ENCODE measurements at regions of chr10 and their contacts with region 1.

Region 1: GRCh38 chr10:102713814-102714620 is at the start of gene ARL3:
- DNase-seq: peak; percentile 98
- ATAC-seq: peak; percentile 94
- H3K4me3 Mint-ChIP-seq: peak within 1 kb of the TSS; percentile 91
- H3K27ac Mint-ChIP-seq: peak within 1 kb of the TSS; percentile 92
- H3K4me1 Mint-ChIP-seq: peaks cover 55% of the 10 kb centered on the region
- H3K27me3 Mint-ChIP-seq: no peaks in the 10 kb centered on the region
- total RNA-seq, gene ARL3: 4.7 to 5.2 TPM

Region 2: GRCh38 chr10:102645741-102646609 is 68.0 kb before region 1 on chr10:
- CTCF ChIA-PET with region 1: interaction called, 48 read pairs
- POLR2A ChIA-PET with region 1: interaction called, 27 read pairs
- DNase-seq: peak; percentile 84
- ATAC-seq: peak; percentile 35
- H3K4me3 Mint-ChIP-seq: peak overlapping the region; percentile 99
- H3K27ac Mint-ChIP-seq: peak overlapping the region; percentile 94
- H3K4me1 Mint-ChIP-seq: peaks cover 55% of the 10 kb centered on the region
- H3K27me3 Mint-ChIP-seq: no peaks in the 10 kb centered on the region

Region 3: DNA sequence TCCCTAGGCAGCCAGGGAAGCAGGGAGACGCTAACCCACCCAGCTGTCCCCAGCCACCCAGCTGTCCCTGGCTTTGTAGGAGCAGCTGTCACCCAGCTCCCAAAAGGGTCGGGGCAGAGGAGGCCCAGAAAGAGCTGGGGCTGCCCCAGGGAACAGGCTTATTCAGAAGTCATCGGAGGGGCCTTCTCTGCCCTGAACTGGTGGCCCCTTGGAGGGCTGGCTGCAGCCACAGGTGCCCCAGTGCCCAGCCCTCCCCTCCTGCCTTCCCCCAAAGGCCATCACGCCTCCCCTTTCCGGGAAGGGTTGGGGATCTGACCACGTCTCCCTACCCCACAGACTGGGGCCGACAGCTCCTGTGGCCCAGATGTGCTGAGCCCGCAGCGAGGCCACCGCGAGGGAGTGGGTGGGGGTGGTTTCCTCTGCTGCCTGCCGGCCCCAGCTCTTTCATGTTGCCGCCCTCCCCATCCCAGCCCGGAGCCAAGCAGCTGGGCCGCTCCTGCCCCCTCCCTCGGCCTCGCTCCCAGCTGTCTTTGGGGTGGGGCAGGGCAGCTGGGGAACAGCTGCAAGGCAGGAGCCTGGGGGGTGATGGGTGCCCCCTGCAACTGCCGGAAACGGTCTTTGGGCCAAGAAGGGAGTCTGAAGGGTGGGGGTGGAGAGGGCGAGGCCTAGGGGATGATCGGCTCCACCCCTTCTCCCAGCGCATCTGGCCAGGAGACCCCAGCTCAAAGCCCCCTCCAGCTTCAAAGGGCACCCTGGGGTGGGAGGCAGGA is 52.9 kb before region 1 on chr10:
- CTCF ChIA-PET with region 1: interaction called, 10 read pairs
- POLR2A ChIA-PET with region 1: interaction called, 11 read pairs
- DNase-seq: peak; percentile 86
- ATAC-seq: peak; percentile 91
- H3K4me3 Mint-ChIP-seq: peak overlapping the region; percentile 54
- H3K27ac Mint-ChIP-seq: peak overlapping the region; percentile 91
- H3K4me1 Mint-ChIP-seq: peaks cover 52% of the 10 kb centered on the region
- H3K27me3 Mint-ChIP-seq: no peaks in the 10 kb centered on the region

Region 4: DNA sequence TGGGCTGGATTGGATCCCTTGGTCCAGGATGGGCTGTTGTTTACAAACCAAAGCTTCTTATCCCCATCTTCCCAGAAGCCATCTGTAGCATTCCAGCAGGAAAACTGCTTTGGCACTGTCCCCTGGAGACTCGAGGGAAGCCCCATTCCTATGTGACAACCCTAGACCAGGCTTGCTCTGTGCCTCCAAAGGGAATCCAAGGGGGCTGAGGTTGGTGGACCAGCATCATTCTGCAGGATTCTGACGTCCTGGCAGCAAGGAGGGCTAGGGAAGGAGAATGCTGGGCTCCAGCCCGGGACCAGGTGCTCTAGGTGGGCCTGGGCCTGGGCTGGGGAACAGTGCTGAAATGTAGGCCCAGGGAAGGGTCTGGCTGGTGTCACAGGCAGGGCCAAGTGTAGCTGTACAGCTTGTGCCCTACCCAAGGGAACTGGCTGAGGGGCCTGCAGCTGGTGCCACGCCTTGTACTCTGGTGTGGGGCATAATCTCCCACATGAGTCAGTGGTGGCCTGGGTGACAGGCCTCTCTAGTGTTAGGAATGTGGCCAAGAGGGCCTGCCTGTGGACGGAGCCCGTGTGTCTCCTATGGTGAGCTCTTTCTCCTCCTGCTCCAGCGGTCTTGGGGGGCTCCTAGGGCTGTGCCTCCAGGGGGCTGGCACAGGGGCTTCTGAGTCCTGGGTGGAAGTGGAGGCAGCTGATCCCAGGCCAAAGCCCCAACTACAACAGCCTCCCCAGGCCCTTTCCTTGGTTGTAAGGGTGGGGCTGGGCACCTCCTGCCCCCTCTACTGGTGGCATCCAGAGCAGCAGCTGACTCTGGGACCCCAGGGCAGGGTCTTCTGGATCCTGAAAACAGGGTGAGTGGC is 44.6 kb before region 1 on chr10:
- CTCF ChIA-PET with region 1: interaction called, 61 read pairs
- POLR2A ChIA-PET with region 1: interaction called, 8 read pairs
- DNase-seq: no peak
- ATAC-seq: no peak
- H3K4me3 Mint-ChIP-seq: no peak overlapping the region
- H3K27ac Mint-ChIP-seq: peak overlapping the region; percentile 55
- H3K4me1 Mint-ChIP-seq: peaks cover 40% of the 10 kb centered on the region
- H3K27me3 Mint-ChIP-seq: no peaks in the 10 kb centered on the region

Region 5: GRCh38 chr10:102678842-102679289 is 35.2 kb before region 1 on chr10:
- CTCF ChIA-PET with region 1: interaction called, 61 read pairs
- POLR2A ChIA-PET with region 1: interaction called, 6 read pairs
- DNase-seq: no peak
- ATAC-seq: no peak
- H3K4me3 Mint-ChIP-seq: no peak overlapping the region
- H3K27ac Mint-ChIP-seq: no peak overlapping the region
- H3K4me1 Mint-ChIP-seq: peaks cover 48% of the 10 kb centered on the region
- H3K27me3 Mint-ChIP-seq: no peaks in the 10 kb centered on the region

Region 6: DNA sequence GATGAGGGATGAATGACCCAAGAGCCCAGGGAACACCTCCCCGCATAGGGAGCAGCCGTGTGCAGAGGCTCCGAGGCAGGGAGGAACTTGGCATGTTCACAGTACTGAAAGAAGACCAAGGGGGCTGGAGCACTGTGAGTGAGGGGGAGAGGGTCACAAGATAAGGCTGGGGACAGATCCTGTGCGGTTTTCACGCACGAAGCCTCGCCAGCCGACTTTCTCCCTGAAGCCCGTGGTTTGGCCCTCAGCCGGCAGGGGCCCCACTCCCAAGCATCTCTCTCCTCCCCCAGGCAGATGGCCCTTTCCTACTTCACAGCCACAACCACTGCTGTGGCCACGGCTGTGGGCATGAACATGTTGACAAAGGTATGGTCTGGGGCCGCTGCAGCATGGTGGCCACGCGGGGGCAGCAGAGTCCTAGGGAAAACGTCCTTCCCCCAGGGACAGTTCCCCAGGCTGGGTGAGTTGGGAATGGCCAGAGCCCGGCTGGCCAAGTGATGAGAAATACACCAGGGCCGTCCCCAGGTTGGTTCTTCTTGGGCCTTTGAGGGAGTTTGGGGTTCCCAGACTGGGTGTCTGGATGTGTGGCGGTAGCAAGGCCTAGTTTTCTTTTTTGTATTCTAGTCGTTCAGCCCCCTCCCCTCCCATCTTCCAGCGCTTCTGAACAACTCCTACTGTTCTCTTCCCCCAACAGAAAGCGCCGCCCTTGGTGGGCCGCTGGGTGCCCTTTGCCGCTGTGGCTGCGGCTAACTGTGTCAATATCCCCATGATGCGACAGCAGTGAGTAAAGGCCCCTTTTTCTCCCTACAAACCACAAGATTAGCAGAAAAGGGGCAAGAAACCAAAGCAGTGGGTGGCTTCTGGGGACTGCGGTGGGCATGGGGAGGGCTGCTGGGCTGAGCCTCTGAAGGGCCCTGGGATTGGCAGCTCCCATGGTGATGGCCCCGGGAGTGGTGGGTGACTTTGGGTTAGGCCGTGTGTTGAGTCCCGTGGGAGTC is 15.3 kb after region 1 on chr10:
- CTCF ChIA-PET with region 1: interaction called, 13 read pairs
- POLR2A ChIA-PET with region 1: interaction called, 4 read pairs
- DNase-seq: peak; percentile 73
- ATAC-seq: peak; percentile 88
- H3K4me3 Mint-ChIP-seq: no peak overlapping the region
- H3K27ac Mint-ChIP-seq: peak overlapping the region; percentile 66
- H3K4me1 Mint-ChIP-seq: peaks cover 14% of the 10 kb centered on the region
- H3K27me3 Mint-ChIP-seq: no peaks in the 10 kb centered on the region

Region 7: GRCh38 chr10:102743588-102744373 is 29.8 kb after region 1 on chr10 and contains the start of gene WBP1L:
- CTCF ChIA-PET with region 1: interaction called, 15 read pairs
- POLR2A ChIA-PET with region 1: interaction called, 3 read pairs
- DNase-seq: peak; percentile 97
- ATAC-seq: peak; percentile 99
- H3K4me3 Mint-ChIP-seq: peak within 1 kb of the TSS; percentile 100
- H3K27ac Mint-ChIP-seq: peak within 1 kb of the TSS; percentile 97
- H3K4me1 Mint-ChIP-seq: peaks cover 46% of the 10 kb centered on the region
- H3K27me3 Mint-ChIP-seq: no peaks in the 10 kb centered on the region
- total RNA-seq, gene WBP1L: 25.7 to 25.9 TPM